Activated CD4-positive, alpha-beta T cell treated with anti-CD3 and anti-CD28 coated beads for 36 hours (primary cell): ENCODE measurements at regions of chr1 and their contacts with region 1.

Region 1: GRCh38 chr1:86833461-86834215 is 80.3 kb downstream of the SELENOF start:
- DNase-seq: peak; percentile 74
- ATAC-seq: peak; percentile 77
- H3K4me3 Mint-ChIP-seq: no peak overlapping the region
- H3K27ac Mint-ChIP-seq: no peak overlapping the region
- H3K4me1 Mint-ChIP-seq: peaks cover 3% of the 10 kb centered on the region
- H3K27me3 Mint-ChIP-seq: no peaks in the 10 kb centered on the region

Region 2: GRCh38 chr1:85998105-85998855 is 835.4 kb before region 1 on chr1:
- CTCF ChIA-PET with region 1: no interaction called
- POLR2A ChIA-PET with region 1: no interaction called
- intact Hi-C with region 1: no loop called
- DNase-seq: no peak
- ATAC-seq: no peak
- H3K4me3 Mint-ChIP-seq: no peak overlapping the region
- H3K27ac Mint-ChIP-seq: no peak overlapping the region
- H3K4me1 Mint-ChIP-seq: no peaks in the 10 kb centered on the region
- H3K27me3 Mint-ChIP-seq: no peaks in the 10 kb centered on the region

Region 3: GRCh38 chr1:86507935-86508582 is 325.6 kb before region 1 on chr1:
- CTCF ChIA-PET with region 1: no interaction called
- POLR2A ChIA-PET with region 1: no interaction called
- intact Hi-C with region 1: no loop called
- DNase-seq: peak; percentile 20
- ATAC-seq: no peak
- H3K4me3 Mint-ChIP-seq: no peak overlapping the region
- H3K27ac Mint-ChIP-seq: no peak overlapping the region
- H3K4me1 Mint-ChIP-seq: no peaks in the 10 kb centered on the region
- H3K27me3 Mint-ChIP-seq: peaks cover 7% of the 10 kb centered on the region

Region 4: GRCh38 chr1:86748622-86749373 is 84.8 kb before region 1 on chr1:
- CTCF ChIA-PET with region 1: no interaction called
- POLR2A ChIA-PET with region 1: no interaction called
- intact Hi-C with region 1: no loop called
- DNase-seq: no peak
- ATAC-seq: no peak
- H3K4me3 Mint-ChIP-seq: no peak overlapping the region
- H3K27ac Mint-ChIP-seq: no peak overlapping the region
- H3K4me1 Mint-ChIP-seq: peaks cover 7% of the 10 kb centered on the region
- H3K27me3 Mint-ChIP-seq: no peaks in the 10 kb centered on the region

Region 5: DNA sequence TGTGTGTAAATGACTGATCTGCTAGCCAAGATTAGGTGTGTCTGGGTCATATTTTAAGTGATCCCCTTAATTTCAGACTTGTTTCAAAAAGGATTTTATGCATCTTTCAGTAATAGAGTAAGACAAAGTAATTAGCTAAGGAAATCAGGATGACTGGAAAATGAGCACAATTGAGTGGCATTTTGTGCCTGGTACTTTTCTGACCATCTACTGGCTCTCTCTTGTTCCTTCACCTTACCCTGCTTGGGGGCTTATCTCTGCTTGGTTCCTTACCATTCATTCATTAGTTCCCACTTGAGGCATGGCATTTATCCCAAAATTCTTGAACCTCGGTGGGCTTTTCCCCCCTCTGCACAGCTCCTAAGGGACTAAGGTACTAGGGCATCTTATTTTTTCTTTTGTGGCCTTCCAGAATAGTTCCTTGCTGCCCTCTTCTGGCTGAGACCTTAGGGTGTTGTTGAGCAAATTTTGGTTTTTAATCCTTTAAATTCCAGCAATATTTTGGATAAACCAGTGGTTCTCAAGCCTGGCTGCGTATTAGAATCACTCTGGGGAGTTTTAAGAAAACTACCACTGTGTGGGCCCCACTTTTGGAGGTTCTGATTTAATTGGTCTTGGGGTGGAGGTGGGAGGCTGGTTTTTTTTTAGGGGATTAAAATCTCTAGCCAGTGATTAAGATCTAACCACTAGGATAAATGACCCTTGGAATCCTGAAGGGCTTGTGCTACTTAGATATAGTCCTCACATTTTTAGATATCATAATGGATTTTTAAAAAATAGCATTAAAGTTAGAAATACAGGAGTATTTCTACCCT is 131.6 kb after region 1 on chr1:
- CTCF ChIA-PET with region 1: interaction called, 12 read pairs
- POLR2A ChIA-PET with region 1: no interaction called
- intact Hi-C with region 1: loop called (anchors 1 kb)
- DNase-seq: peak; percentile 28
- ATAC-seq: peak; percentile 36
- H3K4me3 Mint-ChIP-seq: no peak overlapping the region
- H3K27ac Mint-ChIP-seq: no peak overlapping the region
- H3K4me1 Mint-ChIP-seq: no peaks in the 10 kb centered on the region
- H3K27me3 Mint-ChIP-seq: no peaks in the 10 kb centered on the region